Naive thymus-derived CD4-positive, alpha-beta T cell (primary cell): ENCODE measurements at regions of chr17 and their contacts with region 1.

Region 1: DNA sequence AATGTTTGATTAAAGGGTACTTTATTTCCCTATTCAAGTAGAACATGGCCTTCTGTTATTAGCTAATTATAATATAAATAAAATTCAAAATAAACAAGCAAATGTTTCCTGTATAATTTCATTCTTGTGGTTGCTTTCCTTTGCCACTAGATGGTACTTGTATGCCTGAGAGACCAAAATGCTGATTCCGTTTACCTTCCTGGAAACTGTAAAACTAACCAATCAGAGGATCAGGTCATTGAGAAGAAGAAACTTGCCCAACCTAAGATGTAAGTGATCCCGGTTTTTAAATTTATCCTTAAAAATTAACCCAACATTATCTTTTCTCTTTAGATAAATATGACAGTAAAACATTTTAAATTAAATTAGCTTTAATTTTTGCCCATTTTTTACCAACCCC is 8.1 kb upstream of the ABCA5 start:
- DNase-seq: peak in 2 of 9 donors; percentile 10 to 19
- ATAC-seq: no peak
- H3K4me3 ChIP-seq: no peak overlapping the region
- H3K4me3 Mint-ChIP-seq: peak overlapping the region in 3 of 10 donors; percentile 31 to 58 (median 40)
- H3K27ac ChIP-seq: no peak overlapping the region
- H3K27ac Mint-ChIP-seq: peak overlapping the region in 1 of 9 donors; percentile 26
- H3K4me1 ChIP-seq: no peaks in the 10 kb centered on the region
- H3K4me1 Mint-ChIP-seq: peaks cover 0 to 9% (median 4%) of the 10 kb centered on the region in 7 donors
- H3K27me3 ChIP-seq: no peaks in the 10 kb centered on the region
- H3K27me3 Mint-ChIP-seq: peaks cover 0 to 22% (median 11%) of the 10 kb centered on the region in 5 donors

Region 2: DNA sequence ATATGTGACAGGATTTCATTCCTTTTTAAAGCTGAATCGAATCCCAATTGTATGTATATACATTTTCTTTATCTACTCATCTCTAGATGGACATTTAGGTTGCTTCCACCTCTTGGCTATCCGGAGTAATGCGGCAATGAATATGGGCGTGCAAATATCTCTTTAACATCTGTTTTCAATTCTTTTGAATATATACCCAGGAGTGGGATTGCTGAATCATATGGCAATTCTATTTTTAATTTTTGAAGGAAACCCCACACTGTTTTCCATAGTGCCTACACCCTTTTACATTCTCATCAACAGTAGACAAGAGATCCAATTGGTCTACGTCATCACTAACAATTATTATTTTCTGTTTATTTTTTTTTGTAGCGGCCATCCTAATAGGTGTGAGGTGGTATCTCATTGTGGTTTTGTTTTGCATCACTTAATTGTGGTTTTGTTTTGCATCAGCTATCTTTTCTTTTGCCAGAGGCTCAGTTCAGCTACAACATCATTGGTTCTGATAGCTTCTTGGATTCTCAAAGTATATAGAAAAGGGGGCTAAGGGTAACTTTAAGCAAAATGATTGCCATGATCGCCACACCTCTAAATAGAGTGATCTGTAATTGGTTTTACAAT is 53.9 kb after region 1 on chr17:
- CTCF ChIA-PET with region 1: no interaction called
- POLR2A ChIA-PET with region 1: no interaction called
- intact Hi-C with region 1: loop called in 1 of 2 experiments (anchors 1 kb)
- DNase-seq: no peak
- ATAC-seq: no peak
- H3K4me3 ChIP-seq: no peak overlapping the region
- H3K4me3 Mint-ChIP-seq: no peak overlapping the region
- H3K27ac ChIP-seq: no peak overlapping the region
- H3K27ac Mint-ChIP-seq: no peak overlapping the region
- H3K4me1 ChIP-seq: no peaks in the 10 kb centered on the region
- H3K4me1 Mint-ChIP-seq: no peaks in the 10 kb centered on the region
- H3K27me3 ChIP-seq: no peaks in the 10 kb centered on the region
- H3K27me3 Mint-ChIP-seq: peaks cover 3 to 29% (median 10%) of the 10 kb centered on the region in 5 donors

Region 3: GRCh38 chr17:70137451-70138230 is 802.6 kb after region 1 on chr17:
- CTCF ChIA-PET with region 1: no interaction called
- POLR2A ChIA-PET with region 1: no interaction called
- intact Hi-C with region 1: loop called in 1 of 2 experiments (anchors 2 kb)
- DNase-seq: peak in 2 of 9 donors; percentile 1 to 23
- ATAC-seq: peak; percentile 44
- H3K4me3 ChIP-seq: peak overlapping the region; percentile 2
- H3K4me3 Mint-ChIP-seq: peak overlapping the region; percentile 10 to 79 (median 66)
- H3K27ac ChIP-seq: no peak overlapping the region
- H3K27ac Mint-ChIP-seq: peak overlapping the region in 3 of 9 donors; percentile 13 to 46 (median 22)
- H3K4me1 ChIP-seq: no peaks in the 10 kb centered on the region
- H3K4me1 Mint-ChIP-seq: peaks cover 0 to 13% (median 11%) of the 10 kb centered on the region in 7 donors
- H3K27me3 ChIP-seq: no peaks in the 10 kb centered on the region
- H3K27me3 Mint-ChIP-seq: peaks cover 0 to 2% (median 0%) of the 10 kb centered on the region in 5 donors